B cell (primary cell): ENCODE measurements at regions of chr6 and their contacts with region 1.

Region 1: GRCh38 chr6:7282097-7282906 is 30.7 kb downstream of the SSR1 start:
- DNase-seq: no peak
- ATAC-seq: no peak
- H3K4me3 ChIP-seq: no peak overlapping the region
- H3K4me3 Mint-ChIP-seq: no peak overlapping the region
- H3K27ac ChIP-seq: peak overlapping the region in 1 of 2 donors; percentile 38
- H3K27ac Mint-ChIP-seq: peak overlapping the region; percentile 43
- H3K4me1 ChIP-seq: peaks cover 24 to 27% of the 10 kb centered on the region in 2 donors
- H3K4me1 Mint-ChIP-seq: peaks cover 25% of the 10 kb centered on the region
- H3K27me3 ChIP-seq: no peaks in the 10 kb centered on the region
- H3K27me3 Mint-ChIP-seq: no peaks in the 10 kb centered on the region
- CTCF ChIP-seq: no peak

Region 2: GRCh38 chr6:7589949-7590917 is 307.9 kb after region 1 on chr6 and contains the start of gene SNRNP48:
- CTCF ChIA-PET with region 1: interaction called, 3 read pairs
- POLR2A ChIA-PET with region 1: no interaction called
- intact Hi-C with region 1: loop called (anchors 1 kb)
- DNase-seq: peak; percentile 93
- ATAC-seq: peak; percentile 100
- H3K4me3 ChIP-seq: peak within 1 kb of the TSS; percentile 67 to 97 (median 87)
- H3K4me3 Mint-ChIP-seq: peak within 1 kb of the TSS; percentile 100
- H3K27ac ChIP-seq: peak within 1 kb of the TSS; percentile 23 to 62
- H3K27ac Mint-ChIP-seq: peak within 1 kb of the TSS; percentile 96
- H3K4me1 ChIP-seq: peaks cover 21 to 27% of the 10 kb centered on the region in 2 donors
- H3K4me1 Mint-ChIP-seq: peaks cover 35% of the 10 kb centered on the region
- H3K27me3 ChIP-seq: no peaks in the 10 kb centered on the region
- H3K27me3 Mint-ChIP-seq: no peaks in the 10 kb centered on the region
- CTCF ChIP-seq: no peak
- total RNA-seq, gene SNRNP48: 22.9 and 25.3 TPM in 2 replicates